ENCODE measurements at regions of chr3 and their contacts with region 1.

Region 1: GRCh38 chr3:56988458-56989168 is 71.9 kb upstream of the SPATA12 start:
- DNase-seq: no peak
- ATAC-seq: peak; percentile 86
- H3K4me3 ChIP-seq: no peak overlapping the region
- H3K27ac ChIP-seq: no peak overlapping the region
- H3K4me1 ChIP-seq: no peaks in the 10 kb centered on the region
- H3K27me3 ChIP-seq: peaks cover 0 to 6% of the 10 kb centered on the region in 2 experiments; a peak in 3 of 4 replicates
- CTCF ChIP-seq: peak; percentile 66 to 83 (median 70)
- EP300 ChIP-seq: no peak
- POLR2A ChIP-seq: no peak
- RAD21 ChIP-seq: peak; percentile 97

Region 2: GRCh38 chr3:56753206-56753820 is 235.3 kb before region 1 on chr3:
- CTCF ChIA-PET with region 1: interaction called, 18 read pairs
- POLR2A ChIA-PET with region 1: no interaction called
- RAD21 ChIA-PET with region 1: interaction called, 4 read pairs
- SMC1A ChIA-PET with region 1: interaction called, 9 read pairs
- in situ Hi-C with region 1: no loop called
- intact Hi-C with region 1: no loop called
- DNase-seq: peak; percentile 87
- ATAC-seq: peak; percentile 96
- H3K4me3 ChIP-seq: peak overlapping the region; percentile 43; the same call in 1 of the 2 replicates
- H3K27ac ChIP-seq: peak overlapping the region; percentile 70
- H3K4me1 ChIP-seq: peaks cover 48% of the 10 kb centered on the region
- H3K27me3 ChIP-seq: no peaks in the 10 kb centered on the region
- CTCF ChIP-seq: no peak; a peak in 1 of 6 replicates
- EP300 ChIP-seq: peak; percentile 68 to 79; a peak in 3 of 4 replicates
- POLR2A ChIP-seq: no peak
- RAD21 ChIP-seq: 0 out of 2 replicates have a peak, but pooled peaks have one; percentile 7

Region 3: GRCh38 chr3:56825567-56826438 is 162.8 kb before region 1 on chr3:
- CTCF ChIA-PET with region 1: interaction called, 23 read pairs
- POLR2A ChIA-PET with region 1: interaction called, 4 read pairs
- RAD21 ChIA-PET with region 1: interaction called, 13 read pairs
- SMC1A ChIA-PET with region 1: interaction called, 18 read pairs
- in situ Hi-C with region 1: no loop called
- intact Hi-C with region 1: no loop called
- DNase-seq: no peak
- ATAC-seq: peak; percentile 46
- H3K4me3 ChIP-seq: no peak overlapping the region
- H3K27ac ChIP-seq: no peak overlapping the region
- H3K4me1 ChIP-seq: peaks cover 6% of the 10 kb centered on the region
- H3K27me3 ChIP-seq: no peaks in the 10 kb centered on the region
- CTCF ChIP-seq: no peak
- EP300 ChIP-seq: no peak
- POLR2A ChIP-seq: no peak
- RAD21 ChIP-seq: no peak

Region 4: DNA sequence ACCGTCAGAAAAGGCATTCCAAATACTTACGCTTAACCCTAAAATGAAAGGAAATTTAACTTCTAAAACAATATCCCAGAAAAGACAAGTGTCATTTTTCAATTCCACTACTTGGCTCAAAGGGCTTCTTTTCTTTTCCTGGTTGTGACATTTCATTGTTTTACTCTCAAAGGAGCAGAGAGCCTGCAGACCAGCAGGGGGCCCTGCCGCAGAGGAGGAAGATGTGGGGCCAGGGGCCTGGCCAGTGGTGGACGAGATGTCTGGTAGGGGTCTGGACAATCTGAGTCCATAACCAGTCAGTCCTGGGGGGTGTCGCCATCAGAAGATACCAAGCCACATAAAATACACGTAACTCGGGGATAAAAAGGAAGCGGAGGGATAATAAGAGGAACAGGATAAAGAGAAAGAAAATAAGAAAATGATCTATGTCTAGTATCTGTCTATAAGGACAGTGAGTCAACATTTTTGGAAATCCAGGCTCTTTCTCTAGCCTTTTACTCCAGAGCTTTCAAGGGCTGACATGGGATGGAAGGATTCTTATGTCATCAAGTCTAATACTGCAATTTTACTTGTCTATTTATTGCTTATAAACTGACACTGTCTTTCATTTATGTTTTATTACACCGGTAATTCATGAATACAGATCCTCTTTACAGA is 132.6 kb before region 1 on chr3:
- CTCF ChIA-PET with region 1: interaction called, 136 read pairs
- POLR2A ChIA-PET with region 1: interaction called, 3 read pairs
- RAD21 ChIA-PET with region 1: interaction called, 47 read pairs
- SMC1A ChIA-PET with region 1: interaction called, 54 read pairs
- in situ Hi-C with region 1: no loop called
- intact Hi-C with region 1: loop called (anchors 1 kb)
- DNase-seq: no peak
- ATAC-seq: peak; percentile 90
- H3K4me3 ChIP-seq: 0 out of 2 replicates have a peak overlapping the region, but pooled peaks have one; percentile 20
- H3K27ac ChIP-seq: no peak overlapping the region
- H3K4me1 ChIP-seq: no peaks in the 10 kb centered on the region
- H3K27me3 ChIP-seq: no peaks in the 10 kb centered on the region
- CTCF ChIP-seq: peak; percentile 63 to 86 (median 79)
- EP300 ChIP-seq: no peak
- POLR2A ChIP-seq: no peak
- RAD21 ChIP-seq: peak; percentile 85

Region 5: DNA sequence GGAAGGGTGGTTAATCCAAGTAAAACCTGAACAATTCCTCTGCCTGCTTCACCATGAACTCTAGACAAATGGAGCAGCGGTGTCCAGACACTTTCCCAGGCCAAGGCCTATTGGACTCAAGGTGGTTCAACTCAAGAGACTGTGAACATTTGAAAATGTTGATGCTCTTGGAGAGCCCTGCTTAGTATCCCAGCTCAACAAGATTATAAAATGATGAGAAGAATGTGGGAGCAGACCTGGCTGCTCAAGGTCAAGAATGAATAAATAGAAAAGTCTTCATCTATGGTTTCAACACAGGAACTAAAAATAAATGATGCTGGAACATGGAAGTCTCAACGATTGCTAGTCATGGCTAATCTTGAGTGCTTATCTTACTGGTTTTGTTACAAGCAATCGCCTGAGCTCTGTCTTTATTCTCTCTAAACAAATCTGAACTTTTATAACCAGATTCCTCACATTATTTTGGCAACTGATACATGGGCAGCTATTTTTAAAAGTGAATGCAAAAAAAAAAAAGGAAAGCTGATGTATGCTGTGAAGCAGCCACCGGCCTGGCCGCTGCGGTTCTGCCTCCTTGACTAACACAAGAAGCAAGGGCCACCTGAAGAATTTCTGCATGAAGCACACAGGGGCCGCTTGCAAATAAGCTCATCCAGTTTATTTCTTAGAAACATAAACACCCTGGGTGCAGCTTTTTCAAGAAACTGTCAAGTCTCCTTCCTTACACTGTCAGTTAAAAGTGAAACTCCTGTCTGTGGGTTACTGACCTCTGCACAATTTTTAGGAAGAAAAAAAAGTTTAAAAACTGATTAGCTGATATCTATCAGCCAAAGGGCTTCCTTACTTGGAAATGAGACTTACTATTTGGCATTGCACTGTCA is 66.8 kb before region 1 on chr3:
- CTCF ChIA-PET with region 1: interaction called, 7 read pairs
- POLR2A ChIA-PET with region 1: no interaction called
- RAD21 ChIA-PET with region 1: interaction called, 17 read pairs
- SMC1A ChIA-PET with region 1: interaction called, 19 read pairs
- in situ Hi-C with region 1: no loop called
- intact Hi-C with region 1: loop called (anchors 2 kb)
- DNase-seq: no peak
- ATAC-seq: no peak
- H3K4me3 ChIP-seq: no peak overlapping the region; the same call in 1 of the 2 replicates
- H3K27ac ChIP-seq: no peak overlapping the region
- H3K4me1 ChIP-seq: peaks cover 44% of the 10 kb centered on the region
- H3K27me3 ChIP-seq: no peaks in the 10 kb centered on the region
- CTCF ChIP-seq: no peak
- EP300 ChIP-seq: no peak
- POLR2A ChIP-seq: no peak
- RAD21 ChIP-seq: no peak

Region 6: DNA sequence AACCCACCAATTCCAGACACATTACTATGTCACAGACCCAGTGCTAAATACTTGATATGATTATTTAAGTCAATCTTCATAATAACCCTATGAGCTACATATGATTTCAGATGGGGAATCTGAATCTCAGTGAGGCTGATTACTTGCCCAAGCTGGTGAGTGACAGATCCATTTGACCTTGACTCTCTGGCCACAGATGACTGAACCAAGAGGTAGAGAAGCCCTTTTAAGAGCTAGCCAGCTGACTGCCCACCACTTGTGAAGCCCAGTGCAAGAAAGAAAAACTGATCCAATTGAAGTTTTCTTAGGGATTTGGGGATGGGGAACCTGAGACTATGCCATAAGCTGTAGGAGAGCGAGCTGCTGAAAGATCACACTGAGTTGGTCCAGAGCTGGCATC is 52.8 kb before region 1 on chr3:
- CTCF ChIA-PET with region 1: no interaction called
- POLR2A ChIA-PET with region 1: no interaction called
- RAD21 ChIA-PET with region 1: no interaction called
- SMC1A ChIA-PET with region 1: no interaction called
- in situ Hi-C with region 1: no loop called
- intact Hi-C with region 1: no loop called
- DNase-seq: no peak
- ATAC-seq: no peak
- H3K4me3 ChIP-seq: no peak overlapping the region
- H3K27ac ChIP-seq: no peak overlapping the region
- H3K4me1 ChIP-seq: no peaks in the 10 kb centered on the region
- H3K27me3 ChIP-seq: peaks cover 0 to 3% of the 10 kb centered on the region in 2 experiments; a peak in 1 of 4 replicates
- CTCF ChIP-seq: no peak
- EP300 ChIP-seq: no peak
- POLR2A ChIP-seq: no peak
- RAD21 ChIP-seq: no peak

Region 7: GRCh38 chr3:57017459-57017845 is 28.8 kb after region 1 on chr3:
- CTCF ChIA-PET with region 1: interaction called, 11 read pairs
- POLR2A ChIA-PET with region 1: no interaction called
- RAD21 ChIA-PET with region 1: no interaction called
- SMC1A ChIA-PET with region 1: interaction called, 3 read pairs
- in situ Hi-C with region 1: no loop called
- intact Hi-C with region 1: no loop called
- DNase-seq: no peak
- ATAC-seq: no peak
- H3K4me3 ChIP-seq: no peak overlapping the region
- H3K27ac ChIP-seq: no peak overlapping the region
- H3K4me1 ChIP-seq: peaks cover 26% of the 10 kb centered on the region
- H3K27me3 ChIP-seq: no peaks in the 10 kb centered on the region
- CTCF ChIP-seq: no peak
- EP300 ChIP-seq: no peak
- POLR2A ChIP-seq: no peak
- RAD21 ChIP-seq: no peak

Region 8: DNA sequence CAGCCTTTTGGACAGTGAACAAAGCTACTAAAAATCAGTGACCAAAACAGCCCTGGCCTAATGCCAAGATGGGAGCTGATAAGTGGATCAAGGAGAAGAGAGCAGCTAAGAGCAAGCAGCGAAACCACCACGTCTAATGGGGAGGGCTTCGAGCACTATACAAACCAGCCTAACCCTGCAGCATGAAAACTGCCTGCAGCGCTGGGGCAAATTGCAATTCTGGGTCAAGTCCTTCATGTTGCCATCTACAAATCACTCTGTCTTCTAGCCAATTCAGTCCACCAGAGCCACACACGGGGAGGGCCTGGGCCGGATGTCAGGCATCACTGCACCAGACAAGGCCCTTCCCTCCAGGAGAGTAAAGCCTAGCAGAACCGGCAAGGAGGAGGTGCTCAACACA is 41.3 kb after region 1 on chr3:
- CTCF ChIA-PET with region 1: no interaction called
- POLR2A ChIA-PET with region 1: no interaction called
- RAD21 ChIA-PET with region 1: no interaction called
- SMC1A ChIA-PET with region 1: no interaction called
- in situ Hi-C with region 1: no loop called
- intact Hi-C with region 1: no loop called
- DNase-seq: no peak
- ATAC-seq: no peak
- H3K4me3 ChIP-seq: no peak overlapping the region
- H3K27ac ChIP-seq: no peak overlapping the region
- H3K4me1 ChIP-seq: no peaks in the 10 kb centered on the region
- H3K27me3 ChIP-seq: no peaks in the 10 kb centered on the region
- CTCF ChIP-seq: no peak
- EP300 ChIP-seq: no peak
- POLR2A ChIP-seq: no peak
- RAD21 ChIP-seq: no peak

Measured in GM12878 (cell line).